ENCODE measurements at regions of chr2 and their contacts with region 1.

Region 1: GRCh38 chr2:113203901-113204519 is 30.2 kb downstream of the PSD4 start:
- DNase-seq: peak; percentile 80
- H3K4me3 Mint-ChIP-seq: no peak overlapping the region
- H3K27ac Mint-ChIP-seq: peak overlapping the region; percentile 61
- H3K4me1 Mint-ChIP-seq: peaks cover 11% of the 10 kb centered on the region
- H3K27me3 Mint-ChIP-seq: no peaks in the 10 kb centered on the region

Region 2: GRCh38 chr2:113219889-113220641 is 16.1 kb after region 1 on chr2:
- CTCF ChIA-PET with region 1: interaction called, 12 read pairs
- POLR2A ChIA-PET with region 1: interaction called, 24 read pairs
- DNase-seq: no peak
- H3K4me3 Mint-ChIP-seq: no peak overlapping the region
- H3K27ac Mint-ChIP-seq: no peak overlapping the region
- H3K4me1 Mint-ChIP-seq: peaks cover 22% of the 10 kb centered on the region
- H3K27me3 Mint-ChIP-seq: peaks cover 4% of the 10 kb centered on the region

Region 3: DNA sequence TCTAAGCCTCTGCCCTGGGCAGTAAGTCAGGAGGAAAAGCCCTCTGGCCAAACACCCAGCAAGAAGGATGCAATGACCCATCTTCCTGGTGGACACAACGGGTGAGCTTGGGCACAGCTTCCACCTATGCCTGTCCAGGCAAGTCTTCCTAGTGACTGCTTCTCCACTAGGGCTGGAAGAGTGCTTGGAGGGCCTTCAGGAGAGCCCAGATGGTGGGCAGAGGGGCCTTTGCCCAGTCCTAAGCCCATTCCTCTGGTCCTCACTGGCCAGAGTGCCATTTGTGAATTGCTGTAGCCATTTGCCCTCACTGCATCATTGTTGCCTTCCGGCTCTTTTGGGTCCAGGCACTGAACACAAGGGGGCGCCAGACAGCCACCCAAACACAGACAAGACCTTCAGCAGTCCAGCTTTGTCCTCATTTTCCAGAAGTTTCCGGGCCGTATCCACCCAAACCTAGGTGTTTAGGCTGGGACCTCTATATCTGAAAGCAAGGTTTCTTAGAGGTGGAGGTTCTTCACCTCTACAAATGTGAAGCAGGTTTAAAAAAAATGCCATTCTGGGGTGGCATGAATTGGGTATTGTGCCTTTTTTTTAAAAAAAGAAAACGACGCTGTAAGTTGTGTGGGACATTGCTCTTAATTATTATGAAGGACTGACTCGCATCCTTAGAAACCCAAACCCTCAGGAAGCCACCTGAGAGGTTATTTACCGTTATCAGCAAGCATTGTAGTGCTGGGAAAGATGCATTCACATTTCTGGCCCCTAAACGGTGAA is 45.2 kb after region 1 on chr2:
- CTCF ChIA-PET with region 1: interaction called, 23 read pairs
- POLR2A ChIA-PET with region 1: interaction called, 4 read pairs
- DNase-seq: peak; percentile 82
- H3K4me3 Mint-ChIP-seq: no peak overlapping the region
- H3K27ac Mint-ChIP-seq: peak overlapping the region; percentile 82
- H3K4me1 Mint-ChIP-seq: peaks cover 58% of the 10 kb centered on the region
- H3K27me3 Mint-ChIP-seq: no peaks in the 10 kb centered on the region

Region 4: GRCh38 chr2:113370478-113371091 is 166.6 kb after region 1 on chr2:
- CTCF ChIA-PET with region 1: interaction called, 17 read pairs
- POLR2A ChIA-PET with region 1: no interaction called
- DNase-seq: peak; percentile 75
- H3K4me3 Mint-ChIP-seq: no peak overlapping the region
- H3K27ac Mint-ChIP-seq: no peak overlapping the region
- H3K4me1 Mint-ChIP-seq: peaks cover 10% of the 10 kb centered on the region
- H3K27me3 Mint-ChIP-seq: peaks cover 10% of the 10 kb centered on the region

Region 5: DNA sequence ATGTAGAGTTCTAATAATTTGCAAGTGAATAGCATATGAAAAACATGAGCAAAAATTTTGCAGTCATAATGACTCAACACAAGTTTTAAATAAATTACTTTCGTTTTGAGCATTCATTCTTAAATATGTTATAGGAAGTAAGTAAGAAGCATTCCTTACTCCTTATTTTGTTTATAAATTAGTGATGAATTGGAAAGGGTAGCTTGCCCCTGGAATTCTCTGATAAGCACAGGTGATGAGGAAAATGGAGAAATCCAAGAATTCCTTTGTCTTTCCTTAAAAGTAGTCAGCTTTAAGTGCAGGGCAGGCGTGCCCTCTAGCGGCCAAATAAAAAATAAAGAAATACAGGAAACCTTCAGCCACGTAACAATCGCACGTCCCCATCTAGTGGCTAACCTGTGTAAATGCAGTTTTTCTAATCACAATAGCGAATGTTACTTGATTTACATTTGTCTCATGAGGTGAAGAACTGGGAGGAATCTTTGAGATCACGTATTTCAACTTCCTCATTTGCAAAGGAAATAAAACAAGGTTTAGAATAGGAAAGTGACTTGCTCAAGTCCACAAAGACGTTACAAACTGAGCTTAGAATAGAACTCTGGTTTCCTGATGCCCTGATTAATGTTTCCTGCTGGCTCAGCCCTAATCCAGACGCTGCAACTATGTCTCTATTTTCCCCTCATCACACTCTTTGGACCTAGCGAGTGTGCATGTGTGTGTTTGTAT is 186.3 kb after region 1 on chr2:
- CTCF ChIA-PET with region 1: interaction called, 18 read pairs
- POLR2A ChIA-PET with region 1: interaction called, 3 read pairs
- DNase-seq: peak; percentile 62
- H3K4me3 Mint-ChIP-seq: peak overlapping the region; percentile 53
- H3K27ac Mint-ChIP-seq: peak overlapping the region; percentile 16
- H3K4me1 Mint-ChIP-seq: peaks cover 16% of the 10 kb centered on the region
- H3K27me3 Mint-ChIP-seq: peaks cover 21% of the 10 kb centered on the region

Measured in activated CD4-positive, alpha-beta memory T cell treated with anti-CD3 and anti-CD28 coated beads, Interleukin-2, amount 10 ng/mL, durations not matched to agents 7 days and 5 days (primary cell).